ENCODE measurements at regions of chr1 and their contacts with region 1.

Region 1: DNA sequence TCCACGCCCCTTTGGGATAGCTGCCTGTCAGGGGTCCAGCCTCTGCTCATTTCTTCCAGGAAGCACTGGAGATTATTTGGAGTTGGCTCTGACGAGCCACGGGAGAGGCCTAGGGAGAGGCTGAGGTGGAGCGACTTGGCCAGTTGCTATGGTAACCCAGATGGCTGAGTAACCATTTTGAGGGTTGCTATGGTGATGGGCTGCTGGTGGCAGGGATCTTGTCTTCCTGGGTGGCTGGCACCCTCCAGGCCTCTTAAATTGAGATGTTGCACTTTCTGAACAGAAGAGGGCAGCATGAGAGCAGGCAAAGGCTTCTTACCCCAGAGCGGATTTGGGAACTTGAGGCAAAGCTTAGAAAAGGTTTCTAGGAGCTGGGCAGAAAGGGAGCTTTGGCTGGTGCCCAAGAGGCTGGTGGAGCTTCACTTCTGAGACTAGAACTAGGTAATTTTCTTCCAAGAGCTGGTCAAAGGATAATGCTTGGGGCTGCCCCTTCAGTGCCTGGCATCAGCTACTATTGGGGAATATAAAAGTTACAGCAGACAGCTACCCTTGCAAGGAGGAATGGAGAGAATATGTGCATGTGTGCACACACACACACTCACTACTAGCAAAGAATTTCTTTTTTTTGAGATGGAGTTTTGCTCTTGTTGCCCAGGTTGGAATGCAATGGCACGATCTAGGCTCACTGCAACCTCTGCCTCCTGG is 72.5 kb downstream of the NDUFS5 start:
- DNase-seq: peak; percentile 73 to 87
- ATAC-seq: peak; percentile 84
- H3K4me3 ChIP-seq: no peak overlapping the region
- H3K27ac ChIP-seq: no peak overlapping the region
- H3K4me1 ChIP-seq: no peaks in the 10 kb centered on the region
- H3K27me3 ChIP-seq: no peaks in the 10 kb centered on the region

Region 2: GRCh38 chr1:38873027-38873969 is 225.4 kb before region 1 on chr1 and contains the start of gene MYCBP:
- intact Hi-C with region 1: loop called in 1 of 2 experiments (anchors 10 kb)
- DNase-seq: peak; percentile 97 to 99
- ATAC-seq: peak; percentile 98
- H3K4me3 ChIP-seq: peak within 1 kb of the TSS; percentile 62 to 64
- H3K27ac ChIP-seq: no peak within 1 kb of the TSS
- H3K4me1 ChIP-seq: peaks cover 0 to 4% of the 10 kb centered on the region in 2 donors
- H3K27me3 ChIP-seq: no peaks in the 10 kb centered on the region
- total RNA-seq, gene MYCBP: 11.9 to 13.6 TPM

Region 3: GRCh38 chr1:39258146-39258924 is 159.6 kb after region 1 on chr1:
- intact Hi-C with region 1: loop called in 1 of 2 experiments (anchors 5 kb)
- DNase-seq: peak; percentile 66 to 83
- ATAC-seq: peak; percentile 84
- H3K4me3 ChIP-seq: no peak overlapping the region
- H3K27ac ChIP-seq: peak overlapping the region in 1 of 2 donors; percentile 84
- H3K4me1 ChIP-seq: peaks cover 2 to 3% of the 10 kb centered on the region in 2 donors
- H3K27me3 ChIP-seq: no peaks in the 10 kb centered on the region

Region 4: GRCh38 chr1:39410915-39411436 is 312.3 kb after region 1 on chr1:
- intact Hi-C with region 1: loop called in 1 of 2 experiments (anchors 10 kb)
- DNase-seq: peak; percentile 88 to 91
- ATAC-seq: peak; percentile 47
- H3K4me3 ChIP-seq: peak overlapping the region; percentile 37 to 55
- H3K27ac ChIP-seq: peak overlapping the region; percentile 7 to 78
- H3K4me1 ChIP-seq: peaks cover 4 to 9% of the 10 kb centered on the region in 2 donors
- H3K27me3 ChIP-seq: no peaks in the 10 kb centered on the region

Region 5: DNA sequence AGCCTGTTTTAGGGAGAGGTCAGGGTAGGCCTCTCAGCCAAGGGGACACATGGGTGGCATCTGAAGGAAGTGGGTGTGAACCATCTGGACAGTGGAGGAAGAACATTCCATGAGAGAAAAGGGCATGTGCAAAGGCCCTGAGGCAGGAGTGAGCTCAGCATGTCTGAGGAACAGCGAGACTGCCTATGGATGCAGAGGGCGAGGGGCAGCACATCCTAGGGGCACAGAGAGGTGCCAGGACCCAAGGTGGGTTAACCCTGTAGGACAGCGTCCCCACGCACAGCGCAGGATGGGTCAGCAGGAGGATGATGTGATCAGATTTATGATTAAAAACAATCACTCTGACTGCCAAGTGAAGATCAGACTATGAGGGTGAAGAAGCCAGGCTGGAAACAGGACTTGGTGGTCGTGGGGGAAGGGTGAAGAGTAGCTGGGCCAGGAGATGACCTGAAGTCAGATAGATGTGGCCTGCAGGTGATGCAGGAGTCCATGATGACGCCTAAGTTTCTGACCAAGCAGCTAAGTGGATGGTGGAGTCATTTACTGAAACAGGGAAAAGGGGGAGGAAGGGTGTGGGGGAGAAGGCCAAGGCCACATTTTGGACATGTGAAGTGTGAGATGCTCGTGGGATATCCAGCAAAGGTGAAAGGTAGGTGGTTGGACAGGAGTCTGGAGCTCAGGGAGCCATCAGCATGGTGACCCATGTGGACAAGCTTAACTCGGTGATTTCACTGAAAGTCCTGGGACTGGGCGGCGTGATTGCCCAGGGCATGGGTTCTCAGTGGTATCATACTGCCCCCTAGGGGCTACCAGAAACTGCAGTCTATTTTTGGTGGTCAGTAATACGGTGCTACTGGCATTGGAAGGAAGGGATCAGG is 440.1 kb after region 1 on chr1:
- intact Hi-C with region 1: loop called (anchors 2 to 5 kb)
- DNase-seq: peak in 1 of 2 donors; percentile 80
- ATAC-seq: peak; percentile 86
- H3K4me3 ChIP-seq: no peak overlapping the region
- H3K27ac ChIP-seq: no peak overlapping the region
- H3K4me1 ChIP-seq: no peaks in the 10 kb centered on the region
- H3K27me3 ChIP-seq: no peaks in the 10 kb centered on the region

Measured in aorta (tissue), 5 donors.